ENCODE measurements at regions of chr2 and their contacts with region 1.

Region 1: DNA sequence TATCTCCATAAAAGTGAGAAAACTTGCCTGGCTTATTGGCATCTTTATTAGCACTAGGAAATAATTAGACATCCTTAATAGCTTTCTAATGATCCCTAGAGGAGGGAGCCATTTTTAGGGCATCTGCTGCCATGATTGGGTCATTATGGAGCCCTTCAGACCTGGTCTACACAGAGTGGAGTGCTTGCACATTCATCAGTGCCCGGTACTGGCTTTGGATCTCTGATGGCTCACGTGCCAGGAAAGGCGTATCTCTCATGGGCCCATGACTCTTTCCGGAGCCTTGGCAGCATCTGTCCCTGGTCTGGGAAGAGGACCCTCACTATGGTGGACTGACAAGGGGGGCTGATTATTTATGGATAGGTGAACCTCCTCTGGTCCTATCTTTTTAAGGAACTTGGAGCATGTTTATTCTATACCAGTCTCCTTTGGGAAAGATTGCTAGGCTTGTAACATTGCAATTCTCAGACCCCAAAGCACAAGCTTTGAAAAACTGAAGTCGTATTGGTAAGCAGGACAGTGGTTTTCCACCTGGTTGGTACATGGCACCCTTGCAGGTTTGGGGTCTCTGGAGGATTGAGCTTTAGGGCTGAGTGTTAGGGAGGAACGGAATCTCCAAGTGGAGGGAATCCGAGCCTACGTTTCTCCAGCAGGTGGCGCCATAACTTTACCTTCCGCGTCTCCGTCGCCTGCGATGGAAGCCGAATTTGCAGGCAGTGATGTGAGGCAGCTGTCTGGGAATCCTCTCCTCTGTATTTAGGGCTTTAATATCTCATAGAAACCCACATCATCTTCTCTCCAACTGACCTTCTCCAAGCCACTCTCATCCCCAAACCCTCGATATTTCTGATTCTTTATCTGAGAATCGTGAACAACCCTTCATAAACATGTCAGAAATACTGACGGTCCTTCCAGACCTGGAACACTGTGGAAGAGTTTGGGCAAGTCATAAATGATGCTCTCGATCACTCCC is 27.8 kb downstream of the SIX2 start:
- DNase-seq: peak; percentile 91
- ATAC-seq: peak; percentile 86

Region 2: GRCh38 chr2:43810452-43810851 is 1171.0 kb before region 1 on chr2:
- intact Hi-C with region 1: no loop called
- DNase-seq: no peak
- ATAC-seq: no peak

Region 3: DNA sequence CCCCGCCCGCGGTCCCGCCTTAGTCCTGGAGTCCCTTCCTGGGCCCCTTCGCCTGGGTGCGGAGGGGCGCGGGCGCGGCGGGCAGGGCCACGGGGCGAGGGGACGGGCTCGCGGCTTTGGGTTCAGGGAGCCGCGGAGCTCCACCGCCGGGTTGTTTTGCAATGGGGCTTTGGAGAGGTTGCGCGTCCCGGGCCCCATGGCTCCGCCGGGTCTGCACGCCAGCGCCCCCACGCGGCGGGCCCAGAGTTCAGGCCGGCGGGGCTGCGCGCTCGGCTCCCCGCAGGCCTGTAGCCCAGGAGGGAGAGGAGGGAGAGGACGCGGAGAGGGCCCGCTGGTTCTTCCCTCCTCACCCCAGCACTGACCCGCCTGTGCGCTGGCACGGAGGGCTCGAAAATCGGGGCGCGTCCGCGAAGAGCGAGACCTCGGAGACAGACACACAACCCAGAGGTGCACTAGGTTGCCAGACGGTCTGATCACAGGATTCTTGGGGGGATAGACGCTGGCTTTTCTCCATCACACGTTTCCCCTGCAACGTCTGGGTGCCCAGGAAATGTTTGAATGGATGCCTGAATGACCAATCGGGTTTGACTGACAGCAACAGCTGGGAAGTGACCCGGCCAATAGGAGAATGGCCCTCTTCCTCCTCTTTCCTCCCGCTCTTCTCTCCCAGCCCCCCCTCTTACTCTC is 32.7 kb after region 1 on chr2:
- intact Hi-C with region 1: no loop called
- DNase-seq: peak; percentile 78
- ATAC-seq: peak; percentile 25

Region 4: GRCh38 chr2:45494269-45494977 is 513.0 kb after region 1 on chr2:
- intact Hi-C with region 1: loop called (anchors 10 kb)
- DNase-seq: no peak
- ATAC-seq: peak; percentile 63

Measured in sciatic nerve (tissue), 2 donors.